ENCODE measurements at regions of chr12 and their contacts with region 1.

Region 1: DNA sequence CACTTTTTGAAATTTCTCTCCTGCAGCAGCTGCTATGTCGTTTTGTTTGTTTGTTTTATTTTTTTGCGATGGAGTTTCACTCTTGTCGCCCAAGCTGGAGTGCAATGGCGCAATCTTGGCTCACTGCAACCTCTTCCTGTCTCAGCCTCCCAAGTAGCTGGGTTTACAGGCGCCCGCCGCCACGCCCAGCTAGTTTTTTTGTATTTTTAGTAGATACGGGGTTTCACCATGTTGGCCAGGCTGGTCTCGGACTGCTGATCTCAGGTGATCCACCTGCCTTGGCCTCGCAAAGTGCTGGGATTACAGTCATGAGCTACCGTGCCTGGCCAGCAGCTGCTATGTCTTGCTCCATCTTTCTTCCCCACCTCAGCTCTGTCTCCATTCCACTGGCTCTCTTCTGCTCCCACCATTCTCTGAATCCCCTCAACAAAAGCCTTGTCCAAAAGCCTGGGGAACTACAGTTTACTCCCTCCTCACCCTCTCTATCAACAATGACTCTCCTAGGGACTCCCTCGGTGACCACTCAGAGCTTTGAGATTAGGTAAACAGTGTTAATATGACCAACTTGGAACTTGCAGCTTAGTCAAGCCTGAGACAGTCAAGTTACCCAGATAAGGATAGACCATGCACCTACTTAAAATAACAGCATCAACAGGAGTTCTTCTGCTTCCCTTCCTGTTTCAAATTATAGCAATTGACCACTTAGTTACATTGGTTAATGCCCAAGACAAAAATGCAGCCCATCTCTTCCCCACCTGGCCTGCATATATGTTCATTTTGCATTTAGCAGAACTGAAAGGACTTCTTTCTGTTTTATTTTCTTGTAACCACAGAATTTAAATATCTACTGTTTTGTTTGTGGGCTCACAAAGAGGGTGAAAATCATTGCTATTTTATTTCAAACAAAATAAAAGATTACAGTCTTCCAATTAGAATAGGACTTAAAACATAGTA is 189.0 kb upstream of the AMIGO2 start:
- DNase-seq: no peak
- ATAC-seq: peak; percentile 73
- H3K4me3 Mint-ChIP-seq: peak overlapping the region; percentile 62
- H3K27ac Mint-ChIP-seq: peak overlapping the region; percentile 96
- H3K4me1 Mint-ChIP-seq: peaks cover 59% of the 10 kb centered on the region
- H3K27me3 Mint-ChIP-seq: no peaks in the 10 kb centered on the region
- CTCF ChIP-seq: no peak

Region 2: GRCh38 chr12:45878630-45879255 is 1390.0 kb before region 1 on chr12:
- CTCF ChIA-PET with region 1: no interaction called
- POLR2A ChIA-PET with region 1: no interaction called
- intact Hi-C with region 1: no loop called
- DNase-seq: no peak
- ATAC-seq: no peak
- H3K4me3 Mint-ChIP-seq: no peak overlapping the region
- H3K27ac Mint-ChIP-seq: no peak overlapping the region
- H3K4me1 Mint-ChIP-seq: no peaks in the 10 kb centered on the region
- H3K27me3 Mint-ChIP-seq: no peaks in the 10 kb centered on the region
- CTCF ChIP-seq: no peak

Region 3: GRCh38 chr12:46470036-46470627 is 798.6 kb before region 1 on chr12:
- CTCF ChIA-PET with region 1: no interaction called
- POLR2A ChIA-PET with region 1: no interaction called
- intact Hi-C with region 1: no loop called
- DNase-seq: no peak
- ATAC-seq: peak; percentile 77
- H3K4me3 Mint-ChIP-seq: peak overlapping the region; percentile 50
- H3K27ac Mint-ChIP-seq: peak overlapping the region; percentile 75
- H3K4me1 Mint-ChIP-seq: peaks cover 34% of the 10 kb centered on the region
- H3K27me3 Mint-ChIP-seq: no peaks in the 10 kb centered on the region
- CTCF ChIP-seq: no peak

Region 4: GRCh38 chr12:47356129-47356700 is 87.4 kb after region 1 on chr12:
- CTCF ChIA-PET with region 1: no interaction called
- POLR2A ChIA-PET with region 1: interaction called, 3 read pairs
- intact Hi-C with region 1: loop called (anchors 1 kb)
- DNase-seq: no peak
- ATAC-seq: peak; percentile 77
- H3K4me3 Mint-ChIP-seq: peak overlapping the region; percentile 51
- H3K27ac Mint-ChIP-seq: peak overlapping the region; percentile 97
- H3K4me1 Mint-ChIP-seq: peaks cover 85% of the 10 kb centered on the region
- H3K27me3 Mint-ChIP-seq: no peaks in the 10 kb centered on the region
- CTCF ChIP-seq: no peak

Measured in activated B cell treated with CpG ODN at 0.5 μM for 24 hours (primary cell).